Right lobe of liver (tissue), 6 donors: ENCODE measurements at regions of chr5 and their contacts with region 1.

Region 1: DNA sequence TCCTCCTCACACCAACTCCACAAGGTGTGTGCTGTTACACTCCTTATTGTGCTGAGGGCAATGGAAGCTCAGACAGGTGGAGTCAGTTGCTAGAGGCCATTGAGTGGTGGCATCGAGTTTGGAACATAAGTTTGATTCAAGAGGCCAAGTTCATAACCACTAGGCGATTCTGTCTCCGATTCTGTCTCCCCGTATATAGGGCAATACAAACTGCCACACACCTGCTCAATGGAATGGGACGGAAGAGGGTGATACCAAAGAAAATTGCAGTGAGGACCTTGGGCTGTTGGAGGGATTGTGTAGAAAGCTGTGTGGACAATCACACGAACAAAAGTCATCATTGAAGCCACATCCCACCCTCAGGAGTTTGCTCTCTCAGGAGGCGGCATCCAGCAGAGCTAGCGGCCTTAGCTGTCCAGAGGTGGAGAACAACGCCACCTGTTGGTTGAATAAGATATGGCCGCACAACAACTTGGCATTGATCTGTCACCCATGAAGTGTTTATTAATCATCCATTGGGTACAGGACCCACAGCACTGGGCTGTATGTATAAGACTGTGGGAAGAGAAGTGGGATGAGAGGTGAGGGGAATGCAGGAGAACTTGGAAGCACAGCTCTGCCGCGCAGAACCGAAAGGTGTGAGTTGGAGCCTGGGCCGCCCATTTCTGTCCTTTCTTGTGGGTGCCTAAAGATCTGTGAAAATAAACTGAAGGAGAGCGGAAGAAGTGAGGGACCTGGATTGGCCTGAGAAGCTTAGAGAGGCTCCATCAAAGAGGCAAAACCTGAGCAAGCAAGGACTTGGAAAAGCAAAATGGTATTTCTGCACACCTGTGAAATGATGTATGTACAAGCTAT is 16.1 kb upstream of the NEUROG1 start:
- DNase-seq: peak; percentile 57 to 63 (median 57)
- ATAC-seq: peak; percentile 84 to 93 (median 90)
- H3K4me3 ChIP-seq: no peak overlapping the region
- H3K27ac ChIP-seq: no peak overlapping the region
- H3K4me1 ChIP-seq: no peaks in the 10 kb centered on the region
- H3K27me3 ChIP-seq: no peaks in the 10 kb centered on the region
- CTCF ChIP-seq: peak; percentile 78 to 90 (median 85)
- POLR2A ChIP-seq: no peak

Region 2: GRCh38 chr5:135466178-135467050 is 85.4 kb before region 1 on chr5:
- intact Hi-C with region 1: loop called (anchors 5 kb)
- DNase-seq: peak; percentile 78 to 81 (median 80)
- ATAC-seq: peak; percentile 93 to 98 (median 96)
- H3K4me3 ChIP-seq: peak overlapping the region in 1 of 3 donors; percentile 26
- H3K27ac ChIP-seq: no peak overlapping the region
- H3K4me1 ChIP-seq: no peaks in the 10 kb centered on the region
- H3K27me3 ChIP-seq: no peaks in the 10 kb centered on the region
- CTCF ChIP-seq: peak; percentile 80 to 88 (median 83)
- POLR2A ChIP-seq: no peak